ENCODE measurements at regions of chr3 and their contacts with region 1.

Region 1: DNA sequence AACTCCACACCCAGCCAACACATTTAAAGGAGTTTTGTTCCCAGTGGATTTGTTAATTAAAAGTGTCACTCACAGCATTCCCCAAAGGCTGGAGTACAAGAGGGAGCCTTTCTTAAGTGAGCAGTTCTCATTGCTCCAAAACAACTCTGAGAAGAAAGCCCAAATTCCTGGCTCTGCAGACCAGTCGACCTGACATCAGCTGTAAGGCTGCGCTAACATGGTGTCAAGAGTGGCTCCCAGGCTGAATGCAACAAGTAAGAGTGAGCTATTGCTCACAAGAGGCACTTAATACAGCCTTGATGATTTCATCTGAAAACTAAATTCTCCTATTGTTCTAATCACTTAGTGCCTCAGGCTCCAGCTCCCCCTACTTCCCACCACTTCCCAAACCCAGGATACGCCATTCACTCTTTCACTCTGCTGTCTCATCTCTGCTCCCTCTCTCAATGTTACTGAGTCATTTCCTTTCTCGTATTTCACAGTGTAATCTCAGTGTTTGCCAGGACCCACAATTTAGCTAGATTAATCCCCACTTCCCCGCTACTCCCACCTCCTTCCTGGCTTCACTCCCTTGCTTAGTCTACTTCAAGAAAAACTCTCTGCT is 81.8 kb downstream of the WWTR1 start:
- DNase-seq: peak; percentile 98
- H3K4me3 Mint-ChIP-seq: peak overlapping the region; percentile 55
- H3K27ac Mint-ChIP-seq: peak overlapping the region; percentile 77
- H3K4me1 Mint-ChIP-seq: peaks cover 66% of the 10 kb centered on the region
- H3K27me3 Mint-ChIP-seq: no peaks in the 10 kb centered on the region
- CTCF ChIP-seq: no peak

Region 2: GRCh38 chr3:149536429-149536828 is 39.6 kb before region 1 on chr3:
- CTCF ChIA-PET with region 1: interaction called, 19 read pairs
- POLR2A ChIA-PET with region 1: interaction called, 3 read pairs
- intact Hi-C with region 1: no loop called
- DNase-seq: peak; percentile 27
- H3K4me3 Mint-ChIP-seq: peak overlapping the region; percentile 31
- H3K27ac Mint-ChIP-seq: peak overlapping the region; percentile 67
- H3K4me1 Mint-ChIP-seq: peaks cover 48% of the 10 kb centered on the region
- H3K27me3 Mint-ChIP-seq: no peaks in the 10 kb centered on the region
- CTCF ChIP-seq: no peak

Region 3: DNA sequence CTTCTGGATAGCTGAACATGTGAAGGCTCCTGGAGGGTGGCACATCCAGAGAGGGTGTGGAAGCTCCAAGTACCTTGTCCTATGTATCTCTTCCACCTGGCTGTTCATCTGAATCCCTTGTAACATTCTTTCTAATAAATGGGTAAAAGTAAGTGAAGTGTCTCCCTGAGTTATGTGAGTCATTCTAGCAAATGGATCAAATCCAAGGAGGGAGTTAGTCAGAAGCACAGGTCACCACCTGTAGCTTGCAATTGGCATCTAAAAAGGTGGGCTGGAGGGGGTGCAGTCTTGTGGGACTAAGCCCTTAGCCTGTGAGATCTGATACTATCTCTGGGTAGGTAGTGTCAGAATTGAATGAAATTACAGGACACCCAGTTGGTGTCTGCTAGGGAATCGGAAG is 10.8 kb after region 1 on chr3:
- CTCF ChIA-PET with region 1: interaction called, 48 read pairs
- POLR2A ChIA-PET with region 1: interaction called, 21 read pairs
- intact Hi-C with region 1: no loop called
- DNase-seq: peak; percentile 83
- H3K4me3 Mint-ChIP-seq: no peak overlapping the region
- H3K27ac Mint-ChIP-seq: no peak overlapping the region
- H3K4me1 Mint-ChIP-seq: peaks cover 41% of the 10 kb centered on the region
- H3K27me3 Mint-ChIP-seq: no peaks in the 10 kb centered on the region
- CTCF ChIP-seq: no peak

Region 4: DNA sequence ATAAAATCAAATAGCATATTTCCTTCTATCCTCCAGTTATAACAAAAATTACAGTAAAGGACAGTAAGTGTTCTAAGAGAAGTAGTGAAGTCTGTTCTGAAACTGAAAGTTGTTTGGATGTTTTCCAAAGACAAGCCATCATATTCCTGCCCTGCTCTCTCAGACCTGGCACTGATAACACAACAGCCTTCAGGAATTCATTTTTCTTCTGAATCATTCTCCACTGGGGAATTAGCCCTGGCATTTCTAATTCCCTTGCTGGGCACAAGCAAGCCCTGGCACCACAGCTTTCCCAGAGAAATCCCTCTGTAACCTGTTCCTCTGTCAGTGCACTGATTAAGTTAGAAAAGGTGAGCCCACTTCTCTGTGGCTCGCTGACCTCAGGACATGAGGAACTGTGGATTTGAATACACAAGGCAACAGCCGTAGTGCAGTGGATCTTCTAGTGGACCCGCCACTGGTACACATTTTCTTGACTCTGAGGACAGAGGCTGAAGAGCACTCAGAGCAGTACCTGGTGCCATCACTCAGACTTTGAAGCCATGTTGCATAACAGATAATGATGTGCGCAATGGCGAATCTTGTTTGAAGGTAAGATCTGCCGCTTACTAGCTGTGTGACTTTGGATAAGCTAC is 20.2 kb after region 1 on chr3:
- CTCF ChIA-PET with region 1: interaction called, 3 read pairs
- POLR2A ChIA-PET with region 1: interaction called, 10 read pairs
- intact Hi-C with region 1: no loop called
- DNase-seq: peak; percentile 64
- H3K4me3 Mint-ChIP-seq: peak overlapping the region; percentile 39
- H3K27ac Mint-ChIP-seq: peak overlapping the region; percentile 51
- H3K4me1 Mint-ChIP-seq: peaks cover 12% of the 10 kb centered on the region
- H3K27me3 Mint-ChIP-seq: no peaks in the 10 kb centered on the region
- CTCF ChIP-seq: no peak